ENCODE measurements at regions of chr11 and their contacts with region 1.

Region 1: GRCh38 chr11:75388386-75389275 is 10.7 kb upstream of the RPS3 start:
- DNase-seq: peak; percentile 75
- ATAC-seq: peak; percentile 78
- H3K4me3 Mint-ChIP-seq: no peak overlapping the region
- H3K27ac Mint-ChIP-seq: no peak overlapping the region
- H3K4me1 Mint-ChIP-seq: peaks cover 20% of the 10 kb centered on the region
- H3K27me3 Mint-ChIP-seq: peaks cover 2% of the 10 kb centered on the region; the same call in 1 of the 2 replicates
- CTCF ChIP-seq: peak; percentile 69

Region 2: DNA sequence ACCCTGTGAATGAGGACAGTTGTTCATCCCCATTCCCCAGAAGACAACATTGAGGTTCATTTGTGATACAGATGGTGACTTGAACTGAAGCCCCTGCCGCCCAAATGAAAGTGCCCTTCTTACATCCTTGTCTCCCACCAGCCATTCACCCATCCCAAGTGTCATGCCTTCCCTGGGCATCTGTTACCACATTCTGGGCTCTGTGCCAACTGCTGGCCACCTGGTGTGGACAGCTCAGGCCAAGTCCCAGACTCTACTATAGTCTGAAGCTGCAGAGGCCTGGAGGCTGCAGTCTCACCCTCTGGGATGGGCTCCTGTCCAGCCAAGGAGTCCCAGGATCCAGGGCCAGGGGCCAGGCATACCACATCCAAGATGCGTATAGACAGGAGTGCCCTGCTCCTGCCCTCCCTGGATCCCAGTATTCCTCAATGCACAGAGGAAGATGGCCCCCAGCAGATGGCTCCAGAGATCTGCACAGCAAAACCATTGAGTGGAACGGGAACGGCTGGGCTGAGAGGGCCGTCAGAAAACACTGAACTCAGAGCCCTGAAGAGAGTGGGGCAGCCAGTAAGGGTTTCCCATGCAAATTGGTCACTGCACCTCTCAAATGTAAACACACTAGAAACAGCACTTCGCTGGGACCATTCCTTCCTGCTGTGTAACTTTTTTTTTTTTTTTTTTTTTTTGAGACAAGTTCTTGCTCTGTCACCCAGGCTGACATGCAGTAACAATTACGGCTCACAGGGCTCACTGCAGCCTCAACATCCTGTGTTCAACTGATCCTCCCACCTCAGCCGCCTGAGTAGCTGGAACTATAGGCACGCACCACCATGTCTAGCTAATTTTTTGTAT is 60.0 kb before region 1 on chr11:
- CTCF ChIA-PET with region 1: interaction called, 16 read pairs
- POLR2A ChIA-PET with region 1: interaction called, 5 read pairs
- DNase-seq: peak; percentile 71
- ATAC-seq: peak; percentile 72
- H3K4me3 Mint-ChIP-seq: no peak overlapping the region; the same call in 1 of the 2 replicates
- H3K27ac Mint-ChIP-seq: peak overlapping the region; percentile 99
- H3K4me1 Mint-ChIP-seq: peaks cover 86% of the 10 kb centered on the region
- H3K27me3 Mint-ChIP-seq: no peaks in the 10 kb centered on the region
- CTCF ChIP-seq: no peak

Region 3: DNA sequence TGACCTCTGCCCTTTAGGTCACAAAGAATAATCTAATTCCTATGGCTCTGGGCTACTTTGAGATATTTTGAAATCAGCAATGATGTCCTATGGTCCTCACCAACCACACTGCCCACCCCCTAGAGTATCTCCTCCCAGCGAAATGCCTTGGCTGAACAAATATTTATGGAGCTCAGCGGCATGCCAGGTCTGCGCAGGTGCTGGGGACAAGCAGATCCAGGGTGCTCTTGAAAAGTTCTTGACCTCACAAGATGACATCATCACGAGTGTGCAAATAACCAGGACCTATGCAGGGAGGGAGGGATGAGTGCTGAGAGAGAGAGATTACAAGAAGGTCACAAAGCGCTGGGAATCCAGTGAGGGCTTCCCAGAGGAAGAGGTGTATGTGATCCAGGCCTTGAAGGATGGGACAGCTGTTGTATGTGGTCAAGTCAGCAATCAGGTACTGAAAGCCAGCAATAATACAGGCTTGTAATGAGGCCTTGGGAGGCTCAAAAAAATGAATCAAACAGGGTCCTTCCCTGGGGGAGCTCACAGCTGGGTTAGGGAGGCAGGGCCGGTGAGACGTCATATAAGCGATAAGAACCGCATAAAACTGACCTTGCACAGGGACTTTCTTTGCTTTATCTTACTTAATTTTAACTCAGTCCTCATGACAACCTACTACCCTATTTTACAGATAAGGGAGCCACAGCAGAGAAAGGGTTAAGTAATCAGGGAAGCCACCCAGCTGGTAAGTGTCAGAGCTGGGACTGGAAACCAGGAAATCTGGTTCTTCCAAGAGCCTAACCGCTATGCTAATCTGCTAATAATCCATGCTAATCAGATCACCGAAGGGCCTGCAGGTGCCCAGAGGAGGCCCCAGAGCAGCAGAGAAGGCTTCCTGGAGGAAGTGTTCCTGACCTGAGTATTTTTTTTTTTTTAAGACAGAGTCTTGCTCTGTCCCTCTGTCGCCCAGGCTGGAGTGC is 45.4 kb before region 1 on chr11:
- CTCF ChIA-PET with region 1: interaction called, 20 read pairs
- POLR2A ChIA-PET with region 1: interaction called, 3 read pairs
- DNase-seq: peak; percentile 32
- ATAC-seq: peak; percentile 66
- H3K4me3 Mint-ChIP-seq: peak overlapping the region; percentile 14; the same call in 1 of the 2 replicates
- H3K27ac Mint-ChIP-seq: peak overlapping the region; percentile 92
- H3K4me1 Mint-ChIP-seq: peaks cover 100% of the 10 kb centered on the region
- H3K27me3 Mint-ChIP-seq: no peaks in the 10 kb centered on the region
- CTCF ChIP-seq: no peak

Region 4: GRCh38 chr11:75351791-75352587 is 36.6 kb before region 1 on chr11:
- CTCF ChIA-PET with region 1: interaction called, 13 read pairs
- POLR2A ChIA-PET with region 1: no interaction called
- DNase-seq: peak; percentile 66
- ATAC-seq: peak; percentile 73
- H3K4me3 Mint-ChIP-seq: peak overlapping the region; percentile 73
- H3K27ac Mint-ChIP-seq: 0 out of 2 replicates have a peak overlapping the region, but pooled peaks have one; percentile 30
- H3K4me1 Mint-ChIP-seq: peaks cover 58% of the 10 kb centered on the region
- H3K27me3 Mint-ChIP-seq: peaks cover 8% of the 10 kb centered on the region
- CTCF ChIP-seq: no peak

Region 5: GRCh38 chr11:75474878-75475766 is 86.5 kb after region 1 on chr11:
- CTCF ChIA-PET with region 1: no interaction called
- POLR2A ChIA-PET with region 1: no interaction called
- DNase-seq: peak; percentile 85
- ATAC-seq: peak; percentile 92
- H3K4me3 Mint-ChIP-seq: peak overlapping the region; percentile 60
- H3K27ac Mint-ChIP-seq: peak overlapping the region; percentile 76; the same call in 1 of the 2 replicates
- H3K4me1 Mint-ChIP-seq: peaks cover 22% of the 10 kb centered on the region
- H3K27me3 Mint-ChIP-seq: no peaks in the 10 kb centered on the region; the same call in 1 of the 2 replicates
- CTCF ChIP-seq: no peak